Adrenal gland (tissue), 19 donors: ENCODE measurements at regions of chr2 and their contacts with region 1.

Region 1: DNA sequence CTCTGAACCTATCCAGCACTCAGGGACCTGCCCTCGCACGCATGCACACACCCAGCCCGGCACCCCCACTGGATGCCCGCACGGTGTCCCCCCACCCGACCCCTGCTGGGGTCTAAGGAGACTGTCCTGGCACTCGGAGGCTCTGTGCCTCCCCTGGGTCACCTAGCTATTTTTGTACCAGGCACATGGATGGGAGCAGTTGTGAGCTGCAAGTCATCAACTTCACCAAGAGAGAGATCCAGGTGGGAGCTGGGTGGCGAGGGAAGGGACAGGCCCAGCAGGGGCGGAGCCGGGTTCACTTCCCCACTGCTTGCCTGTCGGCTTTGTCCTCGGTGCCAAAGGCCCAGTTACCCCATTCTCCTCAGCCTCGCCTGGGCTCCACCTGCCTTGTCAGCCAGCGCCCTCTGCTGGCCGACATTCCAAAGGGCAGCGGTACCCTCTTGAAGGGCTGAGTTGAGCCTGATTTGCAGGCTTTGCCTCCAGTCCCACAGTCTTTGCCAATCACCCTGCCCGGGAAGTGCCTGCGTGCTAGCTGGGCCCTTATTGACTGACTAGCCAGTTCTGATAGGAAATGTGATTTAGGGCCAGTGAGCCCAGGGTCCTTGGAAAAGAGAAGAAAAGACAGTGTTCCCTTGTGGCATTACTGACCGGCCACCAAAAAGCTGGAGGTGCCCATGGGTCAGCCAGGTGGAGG is 5.8 kb downstream of the NT5DC4 start:
- DNase-seq: peak; percentile 84 to 94 (median 90)
- H3K4me3 ChIP-seq: no peak overlapping the region
- H3K27ac ChIP-seq: no peak overlapping the region
- H3K4me1 ChIP-seq: peaks cover 0 to 4% of the 10 kb centered on the region in 2 donors
- H3K27me3 ChIP-seq: no peaks in the 10 kb centered on the region
- CTCF ChIP-seq: peak; percentile 94 to 98 (median 97)
- POLR2A ChIP-seq: no peak

Region 2: DNA sequence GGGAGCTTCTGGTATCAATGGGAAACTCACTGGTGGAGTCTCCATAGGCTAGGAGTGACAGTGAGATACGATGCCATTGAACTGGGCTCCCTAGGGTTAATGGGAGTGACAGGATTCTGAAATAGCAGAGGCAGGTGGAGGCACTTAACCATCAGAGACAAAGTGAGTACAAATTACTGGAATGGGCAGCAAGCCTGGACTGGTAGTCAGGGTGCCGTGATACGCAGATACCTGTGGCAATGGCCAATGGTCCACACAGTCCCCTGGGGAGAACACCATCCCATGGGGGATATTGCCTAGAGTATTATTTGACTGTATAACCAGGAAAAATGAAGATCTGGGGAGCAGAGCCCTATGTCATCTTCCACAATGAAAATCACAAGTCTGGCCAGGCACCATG is 124.9 kb before region 1 on chr2:
- intact Hi-C with region 1: loop called (anchors 2 kb)
- DNase-seq: peak in 1 of 7 donors; percentile 18
- H3K4me3 ChIP-seq: no peak overlapping the region
- H3K27ac ChIP-seq: no peak overlapping the region
- H3K4me1 ChIP-seq: no peaks in the 10 kb centered on the region
- H3K27me3 ChIP-seq: no peaks in the 10 kb centered on the region
- CTCF ChIP-seq: no peak
- POLR2A ChIP-seq: no peak

Region 3: GRCh38 chr2:112626604-112627059 is 100.0 kb before region 1 on chr2:
- intact Hi-C with region 1: loop called (anchors 5 to 10 kb)
- DNase-seq: peak; percentile 47 to 70 (median 58)
- H3K4me3 ChIP-seq: no peak overlapping the region
- H3K27ac ChIP-seq: peak overlapping the region in 3 of 5 donors; percentile 18 to 79 (median 68)
- H3K4me1 ChIP-seq: peaks cover 0 to 17% of the 10 kb centered on the region in 2 donors
- H3K27me3 ChIP-seq: no peaks in the 10 kb centered on the region
- CTCF ChIP-seq: peak; percentile 66 to 89 (median 82)
- POLR2A ChIP-seq: no peak

Region 4: GRCh38 chr2:112692496-112692911 is 34.1 kb before region 1 on chr2:
- intact Hi-C with region 1: loop called in 1 of 2 experiments (anchors 5 kb)
- DNase-seq: peak; percentile 27 to 72 (median 61)
- H3K4me3 ChIP-seq: no peak overlapping the region
- H3K27ac ChIP-seq: peak overlapping the region in 1 of 5 donors; percentile 29
- H3K4me1 ChIP-seq: peaks cover 0 to 20% of the 10 kb centered on the region in 2 donors
- H3K27me3 ChIP-seq: no peaks in the 10 kb centered on the region
- CTCF ChIP-seq: no peak
- POLR2A ChIP-seq: no peak